ENCODE measurements at regions of chr19 and their contacts with region 1.

Region 1: DNA sequence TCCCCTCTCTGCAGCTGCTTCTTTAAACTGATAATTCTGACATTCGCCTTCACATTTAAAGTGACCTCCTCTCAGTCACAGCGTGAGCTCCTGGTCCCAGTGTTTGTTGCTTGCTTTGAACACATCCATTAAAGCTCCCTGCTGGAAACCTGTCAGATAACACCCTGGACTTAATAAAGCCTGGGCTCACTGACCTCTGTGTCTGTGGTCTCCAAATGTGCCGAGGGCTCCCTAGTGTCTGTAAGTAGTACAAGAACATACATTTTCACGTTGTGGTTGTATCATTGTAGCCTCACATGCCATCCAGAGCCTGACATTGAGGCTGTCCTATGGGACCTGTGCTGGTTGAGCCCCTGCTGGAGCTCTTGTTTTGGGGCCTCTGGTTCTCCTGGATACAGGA is 2.6 kb upstream of the PSG4 start:
- H3K4me3 ChIP-seq: no peak overlapping the region
- H3K27ac ChIP-seq: no peak overlapping the region
- H3K4me1 ChIP-seq: no peaks in the 10 kb centered on the region
- CTCF ChIP-seq: no peak

Region 2: GRCh38 chr19:43101950-43102349 is 106.0 kb before region 1 on chr19:
- CTCF ChIA-PET with region 1: interaction called, 99 read pairs
- POLR2A ChIA-PET with region 1: no interaction called
- H3K4me3 ChIP-seq: no peak overlapping the region
- H3K27ac ChIP-seq: no peak overlapping the region
- H3K4me1 ChIP-seq: no peaks in the 10 kb centered on the region
- CTCF ChIP-seq: peak; percentile 66

Region 3: GRCh38 chr19:43191191-43191590 is 16.8 kb before region 1 on chr19:
- CTCF ChIA-PET with region 1: interaction called, 117 read pairs
- POLR2A ChIA-PET with region 1: interaction called, 13 read pairs
- H3K4me3 ChIP-seq: no peak overlapping the region
- H3K27ac ChIP-seq: peak overlapping the region; percentile 92; the same call in 1 of the 2 replicates
- H3K4me1 ChIP-seq: peaks cover 7% of the 10 kb centered on the region
- CTCF ChIP-seq: no peak

Region 4: DNA sequence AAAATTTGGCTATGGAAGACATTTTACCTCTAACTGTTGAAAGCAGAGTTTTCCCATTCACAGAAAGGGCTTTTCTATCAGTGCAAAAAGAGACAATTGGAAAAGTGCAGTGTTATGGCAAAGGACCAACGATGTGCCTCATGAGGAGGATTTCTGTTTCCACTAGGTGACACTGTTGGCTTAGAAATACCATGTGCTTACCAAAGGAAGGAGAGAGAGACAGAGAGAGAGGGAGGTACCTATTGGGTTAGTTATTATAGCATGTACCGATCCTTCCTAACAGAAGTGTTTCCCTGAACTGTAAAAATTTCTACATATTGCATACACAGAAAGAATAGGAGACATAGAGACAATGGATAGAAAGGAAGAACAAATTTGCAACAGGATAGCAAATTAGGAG is 21.3 kb after region 1 on chr19:
- CTCF ChIA-PET with region 1: interaction called, 58 read pairs
- POLR2A ChIA-PET with region 1: no interaction called
- H3K4me3 ChIP-seq: no peak overlapping the region
- H3K27ac ChIP-seq: no peak overlapping the region
- H3K4me1 ChIP-seq: peaks cover 1% of the 10 kb centered on the region; the same call in 1 of the 2 replicates
- CTCF ChIP-seq: peak; percentile 69

Region 5: DNA sequence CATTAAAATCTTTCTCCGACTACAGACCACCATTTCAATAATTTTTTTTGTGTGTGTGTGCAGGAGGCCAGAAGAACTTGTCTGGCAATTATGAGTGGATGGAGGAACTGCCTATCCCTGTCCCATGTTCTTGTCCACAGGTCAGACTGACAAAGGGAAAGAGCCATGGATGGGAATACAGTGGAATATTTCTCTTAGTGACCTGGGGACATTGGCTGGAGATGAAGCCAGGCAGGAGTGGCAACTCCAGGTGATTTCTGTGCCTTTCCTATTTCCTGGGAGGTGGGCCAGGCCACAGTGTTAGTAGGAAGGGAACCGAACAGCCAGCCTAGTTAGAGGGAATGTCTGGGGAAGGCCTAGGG is 57.7 kb after region 1 on chr19:
- CTCF ChIA-PET with region 1: interaction called, 10 read pairs
- POLR2A ChIA-PET with region 1: interaction called, 4 read pairs
- H3K4me3 ChIP-seq: no peak overlapping the region
- H3K27ac ChIP-seq: peak overlapping the region; percentile 58
- H3K4me1 ChIP-seq: peaks cover 3% of the 10 kb centered on the region; the same call in 1 of the 2 replicates
- CTCF ChIP-seq: no peak

Region 6: GRCh38 chr19:43316592-43317319 is 108.8 kb after region 1 on chr19:
- CTCF ChIA-PET with region 1: interaction called, 12 read pairs
- POLR2A ChIA-PET with region 1: no interaction called
- H3K4me3 ChIP-seq: no peak overlapping the region
- H3K27ac ChIP-seq: no peak overlapping the region
- H3K4me1 ChIP-seq: peaks cover 3% of the 10 kb centered on the region; the same call in 1 of the 2 replicates
- CTCF ChIP-seq: peak; percentile 99

Measured in HEK293 (cell line).